Activated naive CD4-positive, alpha-beta T cell treated with anti-CD3 and anti-CD28 coated beads for 36 hours (primary cell): ENCODE measurements at regions of chr2 and their contacts with region 1.

Region 1: DNA sequence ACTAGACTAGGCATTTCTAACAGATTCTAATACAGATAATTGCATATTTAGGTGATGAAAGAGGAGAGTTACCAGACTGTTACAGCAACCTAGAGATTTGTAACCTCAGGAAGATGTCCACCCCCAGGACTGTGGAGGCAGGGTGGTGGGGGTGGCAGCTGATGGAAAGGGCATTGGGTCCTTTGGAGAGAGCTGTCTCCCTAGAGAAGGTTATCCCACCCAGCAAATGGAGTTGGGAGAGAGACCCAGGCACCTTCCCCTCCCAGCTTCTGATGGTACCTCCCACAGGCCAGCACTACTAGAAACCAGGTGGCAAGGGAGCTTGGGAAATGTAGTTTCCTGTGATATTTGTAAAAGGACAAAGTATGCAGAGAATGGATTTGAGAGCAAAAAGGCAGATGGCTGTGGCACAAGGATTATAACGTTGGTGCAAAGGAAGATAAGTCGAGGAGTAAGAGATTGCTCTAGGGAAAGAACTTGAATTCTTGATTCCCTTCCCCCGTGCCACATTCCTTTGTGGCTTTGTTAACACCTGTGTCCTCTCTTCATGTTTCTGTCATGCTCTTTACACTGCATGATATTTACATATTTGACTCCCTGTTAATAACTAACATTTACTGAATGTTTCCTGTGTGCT is 75.5 kb upstream of the MGAT5 start:
- DNase-seq: no peak
- H3K4me3 Mint-ChIP-seq: no peak overlapping the region
- H3K27ac Mint-ChIP-seq: no peak overlapping the region
- H3K4me1 Mint-ChIP-seq: peaks cover 65% of the 10 kb centered on the region
- H3K27me3 Mint-ChIP-seq: no peaks in the 10 kb centered on the region

Region 2: DNA sequence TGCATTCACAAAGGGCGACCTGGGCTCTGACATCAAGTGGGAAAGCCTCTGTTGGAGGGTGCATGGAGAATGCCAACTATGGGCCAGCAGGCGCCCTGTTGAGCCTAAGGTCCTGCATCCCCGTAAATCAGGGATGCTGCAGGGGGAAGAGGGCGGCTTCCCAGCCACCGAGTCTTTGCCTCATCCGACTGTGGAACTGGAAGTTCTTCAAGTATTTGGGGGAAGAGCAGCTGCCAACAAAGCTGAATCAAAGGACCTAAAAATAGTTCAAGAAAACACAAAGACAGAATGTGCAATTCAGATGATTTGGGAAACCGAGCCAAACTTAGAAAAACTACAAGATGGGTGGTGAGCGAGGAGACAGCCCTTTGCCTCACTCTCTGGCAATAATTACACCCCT is 205.6 kb before region 1 on chr2:
- CTCF ChIA-PET with region 1: no interaction called
- intact Hi-C with region 1: no loop called
- DNase-seq: no peak
- H3K4me3 Mint-ChIP-seq: no peak overlapping the region
- H3K27ac Mint-ChIP-seq: no peak overlapping the region
- H3K4me1 Mint-ChIP-seq: no peaks in the 10 kb centered on the region
- H3K27me3 Mint-ChIP-seq: no peaks in the 10 kb centered on the region

Region 3: GRCh38 chr2:134154246-134154645 is 24.1 kb before region 1 on chr2:
- CTCF ChIA-PET with region 1: no interaction called
- intact Hi-C with region 1: no loop called
- DNase-seq: no peak
- H3K4me3 Mint-ChIP-seq: no peak overlapping the region
- H3K27ac Mint-ChIP-seq: no peak overlapping the region
- H3K4me1 Mint-ChIP-seq: peaks cover 22% of the 10 kb centered on the region
- H3K27me3 Mint-ChIP-seq: no peaks in the 10 kb centered on the region

Region 4: DNA sequence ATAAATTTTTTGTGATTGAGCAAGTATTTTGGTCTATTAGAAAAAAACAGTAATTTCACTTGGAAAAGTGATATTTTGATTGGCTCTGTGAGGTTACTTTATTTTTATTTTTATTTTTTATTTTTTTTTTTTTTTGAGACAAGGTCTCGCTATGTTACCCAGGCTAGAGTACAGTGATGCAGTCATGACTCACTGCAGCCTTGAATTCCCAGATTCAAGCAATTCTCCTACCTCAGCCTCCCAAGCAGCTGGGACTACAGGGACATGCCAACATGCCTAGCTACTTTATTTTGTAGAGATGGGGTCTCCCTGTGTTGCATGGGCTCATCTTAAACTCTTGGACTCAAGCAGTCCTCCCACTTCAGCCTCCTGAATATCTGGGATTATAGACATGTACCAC is 14.6 kb after region 1 on chr2:
- CTCF ChIA-PET with region 1: interaction called, 4 read pairs
- intact Hi-C with region 1: loop called (anchors 2 kb)
- DNase-seq: no peak
- H3K4me3 Mint-ChIP-seq: no peak overlapping the region
- H3K27ac Mint-ChIP-seq: no peak overlapping the region
- H3K4me1 Mint-ChIP-seq: peaks cover 56% of the 10 kb centered on the region
- H3K27me3 Mint-ChIP-seq: no peaks in the 10 kb centered on the region